T47D (cell line): ENCODE measurements at regions of chr10 and their contacts with region 1.

Region 1: DNA sequence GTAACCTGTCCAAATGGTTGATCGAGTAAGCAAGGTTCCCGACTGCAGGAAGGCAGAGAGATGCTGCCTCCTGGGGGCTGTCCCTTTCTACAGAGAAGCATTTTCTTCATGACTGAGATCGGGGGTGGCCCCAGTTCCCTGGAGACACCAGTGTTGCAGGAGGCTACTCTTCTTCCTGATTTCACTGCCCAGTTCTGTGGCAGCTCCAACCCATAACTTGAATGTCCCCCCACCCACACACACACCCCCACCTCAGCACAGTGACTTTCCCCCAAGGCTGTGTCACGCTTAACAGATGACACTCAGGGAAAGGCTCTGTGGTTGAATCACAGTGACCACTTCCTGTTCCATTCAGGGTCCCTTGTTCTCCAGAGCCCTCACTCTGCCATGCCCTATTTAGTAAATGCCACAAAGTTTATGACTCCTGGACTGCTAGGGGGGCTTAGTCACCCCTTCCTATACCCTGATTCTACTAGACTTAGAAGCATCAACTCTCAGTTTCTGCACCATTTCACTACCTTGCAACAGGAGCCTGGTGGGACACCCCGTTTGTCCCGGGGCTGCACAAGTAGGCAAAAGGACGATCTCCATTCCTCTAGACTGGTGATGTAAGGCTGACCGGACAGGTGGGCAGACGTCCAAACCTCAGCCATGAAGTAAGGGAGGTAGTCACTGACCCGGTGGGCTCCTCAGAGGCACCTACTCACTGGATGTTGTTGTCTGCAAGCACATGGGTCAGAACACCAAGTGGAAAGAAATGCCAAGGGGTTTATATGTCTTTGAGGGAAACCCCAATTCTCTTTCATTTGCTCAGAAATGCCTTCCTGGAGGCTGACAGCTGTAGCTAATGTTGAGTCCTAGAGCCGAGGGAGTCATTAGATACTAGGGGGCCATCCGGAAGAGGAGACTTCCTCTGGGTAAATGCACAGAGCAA is 31.3 kb upstream of the SMC3 start:
- DNase-seq: peak in 1 of 2 experiments; percentile 32

Region 2: GRCh38 chr10:110336111-110336721 is 200.0 kb before region 1 on chr10:
- in situ Hi-C with region 1: loop called (anchors 25 kb)
- DNase-seq: peak in 1 of 2 experiments; percentile 20